GM12878 (cell line): ENCODE measurements at regions of chr6 and their contacts with region 1.

Region 1: GRCh38 chr6:70107852-70108629 is 194.8 kb downstream of the COL9A1 start:
- DNase-seq: peak; percentile 21
- ATAC-seq: peak; percentile 54
- H3K4me3 ChIP-seq: no peak overlapping the region
- H3K27ac ChIP-seq: no peak overlapping the region
- H3K4me1 ChIP-seq: no peaks in the 10 kb centered on the region
- H3K27me3 ChIP-seq: no peaks in the 10 kb centered on the region
- CTCF ChIP-seq: peak; percentile 50 to 71 (median 65)
- EP300 ChIP-seq: no peak
- POLR2A ChIP-seq: no peak
- RAD21 ChIP-seq: peak; percentile 92

Region 2: DNA sequence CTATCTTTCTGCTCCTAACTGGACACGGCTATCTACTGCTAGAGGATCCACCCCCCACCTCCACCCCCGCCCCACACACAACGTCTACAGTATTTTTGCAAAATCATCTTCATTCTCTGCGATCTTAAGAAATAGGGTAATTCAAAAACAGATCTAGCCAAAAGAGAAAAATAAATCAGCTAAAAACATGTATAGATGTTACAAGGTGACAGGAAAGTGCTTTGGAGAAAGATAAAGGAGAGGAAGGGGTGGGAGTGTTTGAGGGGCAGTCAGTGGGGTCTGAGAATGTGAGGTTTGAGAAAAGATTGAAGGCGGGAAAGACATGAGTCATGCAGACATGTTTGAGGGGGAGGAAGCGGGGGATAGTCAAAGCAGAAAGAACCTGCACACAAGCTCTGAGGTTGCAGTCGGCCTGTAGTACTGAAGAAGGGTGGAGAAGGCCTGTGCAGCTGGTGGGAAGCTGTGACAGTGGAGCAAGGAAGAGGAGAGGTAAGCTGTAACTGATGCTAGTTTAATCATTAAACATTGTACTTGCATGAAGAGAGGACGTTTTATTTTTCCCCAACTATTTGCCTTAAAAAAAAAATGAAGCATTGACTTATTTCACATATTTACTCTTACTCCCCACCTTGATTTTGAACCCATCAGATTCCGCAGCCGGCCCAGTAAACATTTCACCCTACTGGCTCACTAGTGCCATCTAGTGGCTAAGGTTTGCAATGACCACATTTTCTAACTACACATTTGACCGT is 1140.3 kb before region 1 on chr6:
- CTCF ChIA-PET with region 1: no interaction called
- POLR2A ChIA-PET with region 1: no interaction called
- RAD21 ChIA-PET with region 1: no interaction called
- SMC1A ChIA-PET with region 1: no interaction called
- in situ Hi-C with region 1: loop called (anchors 25 kb)
- intact Hi-C with region 1: no loop called
- DNase-seq: peak; percentile 12
- ATAC-seq: peak; percentile 80
- H3K4me3 ChIP-seq: no peak overlapping the region
- H3K27ac ChIP-seq: no peak overlapping the region
- H3K4me1 ChIP-seq: no peaks in the 10 kb centered on the region
- H3K27me3 ChIP-seq: no peaks in the 10 kb centered on the region; a peak in 1 of 4 replicates
- CTCF ChIP-seq: peak; percentile 81 to 86 (median 83)
- EP300 ChIP-seq: no peak
- POLR2A ChIP-seq: no peak
- RAD21 ChIP-seq: peak; percentile 70

Region 3: DNA sequence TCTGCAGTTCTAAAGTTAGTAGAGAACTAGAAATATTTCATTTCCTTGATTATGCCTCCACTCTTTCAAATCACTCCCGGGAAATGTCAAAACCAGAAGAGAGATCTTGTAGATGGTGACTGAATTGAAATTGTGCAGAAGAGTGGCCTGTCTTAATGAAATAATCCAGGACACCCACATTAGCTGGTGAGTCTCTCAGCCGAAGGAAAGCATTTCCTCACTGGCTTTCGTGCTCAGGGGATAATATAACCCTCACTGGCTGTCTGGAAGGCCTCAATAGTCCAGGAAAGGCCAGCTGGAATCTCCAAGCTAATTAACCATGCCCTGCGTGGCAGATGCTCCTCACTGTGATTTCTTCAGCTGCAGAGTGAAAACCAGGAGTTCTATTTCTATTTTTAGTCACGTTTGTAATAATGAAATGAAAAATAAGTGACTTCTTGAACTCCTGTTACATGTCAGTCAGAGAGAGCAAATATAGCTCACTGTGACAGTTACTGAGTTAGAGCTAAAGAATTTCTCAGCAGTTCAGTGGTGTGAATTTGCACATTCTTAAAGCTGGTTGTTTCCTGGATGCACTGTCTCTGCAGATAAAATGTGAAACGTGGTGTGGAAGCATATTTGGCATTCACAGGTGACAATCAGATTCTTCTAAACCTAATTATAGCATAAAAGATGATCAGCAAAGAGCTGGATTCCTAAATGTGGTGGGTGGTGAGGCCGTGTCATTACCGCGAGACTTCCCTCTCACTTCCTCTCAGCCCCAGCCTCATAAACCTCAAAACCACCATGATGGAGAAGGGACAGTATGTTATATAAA is 522.9 kb before region 1 on chr6:
- CTCF ChIA-PET with region 1: no interaction called
- POLR2A ChIA-PET with region 1: no interaction called
- RAD21 ChIA-PET with region 1: no interaction called
- SMC1A ChIA-PET with region 1: no interaction called
- in situ Hi-C with region 1: no loop called
- intact Hi-C with region 1: no loop called
- DNase-seq: peak; percentile 35
- ATAC-seq: peak; percentile 88
- H3K4me3 ChIP-seq: no peak overlapping the region
- H3K27ac ChIP-seq: peak overlapping the region; percentile 20; the same call in 1 of the 2 replicates
- H3K4me1 ChIP-seq: peaks cover 15% of the 10 kb centered on the region
- H3K27me3 ChIP-seq: no peaks in the 10 kb centered on the region
- CTCF ChIP-seq: no peak
- EP300 ChIP-seq: no peak
- POLR2A ChIP-seq: no peak
- RAD21 ChIP-seq: peak; percentile 1; the same call in 1 of the 2 replicates

Region 4: GRCh38 chr6:69791065-69791471 is 317.0 kb before region 1 on chr6:
- CTCF ChIA-PET with region 1: interaction called, 3 read pairs
- POLR2A ChIA-PET with region 1: interaction called, 3 read pairs
- RAD21 ChIA-PET with region 1: interaction called, 14 read pairs
- SMC1A ChIA-PET with region 1: interaction called, 19 read pairs
- in situ Hi-C with region 1: no loop called
- intact Hi-C with region 1: no loop called
- DNase-seq: no peak
- ATAC-seq: peak; percentile 59
- H3K4me3 ChIP-seq: peak overlapping the region; percentile 43
- H3K27ac ChIP-seq: peak overlapping the region; percentile 46; the same call in 1 of the 2 replicates
- H3K4me1 ChIP-seq: peaks cover 27% of the 10 kb centered on the region
- H3K27me3 ChIP-seq: no peaks in the 10 kb centered on the region
- CTCF ChIP-seq: no peak
- EP300 ChIP-seq: no peak
- POLR2A ChIP-seq: no peak
- RAD21 ChIP-seq: no peak

Region 5: DNA sequence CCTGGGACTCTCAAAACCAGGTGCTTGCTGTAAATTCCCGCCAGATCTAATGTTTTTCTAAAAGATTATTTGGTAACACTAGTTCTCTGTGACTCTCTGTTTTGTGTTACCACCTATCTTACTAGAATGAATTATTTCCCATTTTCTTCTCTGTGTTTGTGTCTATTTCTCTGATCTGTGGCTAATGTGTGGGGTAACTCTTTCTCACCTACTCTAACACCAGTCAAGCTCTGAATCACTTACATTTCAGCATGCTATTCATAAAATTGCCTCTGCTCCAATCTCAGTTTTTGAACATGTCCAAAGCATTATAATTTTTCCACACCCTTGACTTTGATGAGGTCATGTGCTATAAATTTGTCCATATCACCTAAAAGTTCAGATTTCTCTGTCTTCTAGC is 264.9 kb before region 1 on chr6:
- CTCF ChIA-PET with region 1: interaction called, 28 read pairs
- POLR2A ChIA-PET with region 1: no interaction called
- RAD21 ChIA-PET with region 1: interaction called, 32 read pairs
- SMC1A ChIA-PET with region 1: interaction called, 37 read pairs
- in situ Hi-C with region 1: no loop called
- intact Hi-C with region 1: no loop called
- DNase-seq: no peak
- ATAC-seq: peak; percentile 80
- H3K4me3 ChIP-seq: no peak overlapping the region
- H3K27ac ChIP-seq: no peak overlapping the region
- H3K4me1 ChIP-seq: no peaks in the 10 kb centered on the region
- H3K27me3 ChIP-seq: no peaks in the 10 kb centered on the region
- CTCF ChIP-seq: no peak
- EP300 ChIP-seq: peak; percentile 5 to 48; a peak in 1 of 4 replicates
- POLR2A ChIP-seq: no peak
- RAD21 ChIP-seq: no peak

Region 6: DNA sequence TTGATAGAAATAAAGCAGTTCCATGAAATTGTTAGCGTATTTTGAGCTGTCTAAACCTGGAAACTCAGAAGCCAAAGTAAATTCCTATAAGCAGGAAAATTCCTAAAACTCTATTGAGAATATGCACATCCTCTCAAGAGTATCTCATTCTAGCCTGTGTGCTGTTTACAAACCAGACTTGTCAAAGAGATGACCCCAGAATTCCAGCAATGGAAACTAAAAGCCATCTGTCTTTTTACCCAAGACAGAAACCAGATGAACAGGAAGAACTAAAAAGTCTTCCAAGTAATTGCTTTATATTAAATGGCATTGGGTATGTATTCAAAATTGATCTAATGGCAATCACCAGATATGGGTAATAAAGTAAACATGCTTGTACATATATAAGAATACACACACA is 149.1 kb before region 1 on chr6:
- CTCF ChIA-PET with region 1: no interaction called
- POLR2A ChIA-PET with region 1: no interaction called
- RAD21 ChIA-PET with region 1: no interaction called
- SMC1A ChIA-PET with region 1: no interaction called
- in situ Hi-C with region 1: no loop called
- intact Hi-C with region 1: no loop called
- DNase-seq: no peak
- ATAC-seq: no peak
- H3K4me3 ChIP-seq: no peak overlapping the region
- H3K27ac ChIP-seq: no peak overlapping the region
- H3K4me1 ChIP-seq: no peaks in the 10 kb centered on the region
- H3K27me3 ChIP-seq: no peaks in the 10 kb centered on the region
- CTCF ChIP-seq: no peak
- EP300 ChIP-seq: no peak
- POLR2A ChIP-seq: no peak
- RAD21 ChIP-seq: no peak

Region 7: DNA sequence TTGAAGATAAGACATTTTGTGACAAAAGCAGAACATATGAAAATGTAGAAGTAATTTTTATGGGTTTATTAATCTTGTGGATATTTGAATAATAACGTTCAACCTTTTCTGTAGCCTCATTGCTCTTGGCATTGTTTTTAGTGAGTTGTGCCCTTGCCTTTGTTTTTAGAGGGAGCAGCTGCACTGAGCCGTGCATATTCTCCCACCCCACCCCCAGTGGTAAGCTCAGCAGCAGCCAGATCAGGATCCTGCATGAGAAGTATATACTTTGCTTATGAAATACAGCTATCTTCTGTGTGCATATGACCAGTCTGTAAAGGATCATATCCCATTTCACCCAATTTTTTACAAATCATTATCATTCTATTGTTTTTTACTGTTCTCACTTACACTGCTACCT is 10.6 kb after region 1 on chr6:
- CTCF ChIA-PET with region 1: interaction called, 20 read pairs
- POLR2A ChIA-PET with region 1: no interaction called
- RAD21 ChIA-PET with region 1: interaction called, 6 read pairs
- SMC1A ChIA-PET with region 1: interaction called, 9 read pairs
- in situ Hi-C with region 1: no loop called
- intact Hi-C with region 1: no loop called
- DNase-seq: no peak
- ATAC-seq: no peak
- H3K4me3 ChIP-seq: no peak overlapping the region
- H3K27ac ChIP-seq: no peak overlapping the region
- H3K4me1 ChIP-seq: no peaks in the 10 kb centered on the region
- H3K27me3 ChIP-seq: no peaks in the 10 kb centered on the region
- CTCF ChIP-seq: no peak
- EP300 ChIP-seq: no peak
- POLR2A ChIP-seq: no peak
- RAD21 ChIP-seq: no peak

Region 8: GRCh38 chr6:70145178-70145577 is 37.1 kb after region 1 on chr6:
- CTCF ChIA-PET with region 1: no interaction called
- POLR2A ChIA-PET with region 1: no interaction called
- RAD21 ChIA-PET with region 1: no interaction called
- SMC1A ChIA-PET with region 1: no interaction called
- in situ Hi-C with region 1: no loop called
- intact Hi-C with region 1: no loop called
- DNase-seq: no peak
- ATAC-seq: no peak
- H3K4me3 ChIP-seq: no peak overlapping the region
- H3K27ac ChIP-seq: no peak overlapping the region
- H3K4me1 ChIP-seq: no peaks in the 10 kb centered on the region
- H3K27me3 ChIP-seq: no peaks in the 10 kb centered on the region
- CTCF ChIP-seq: no peak
- EP300 ChIP-seq: no peak
- POLR2A ChIP-seq: no peak
- RAD21 ChIP-seq: no peak

Region 9: DNA sequence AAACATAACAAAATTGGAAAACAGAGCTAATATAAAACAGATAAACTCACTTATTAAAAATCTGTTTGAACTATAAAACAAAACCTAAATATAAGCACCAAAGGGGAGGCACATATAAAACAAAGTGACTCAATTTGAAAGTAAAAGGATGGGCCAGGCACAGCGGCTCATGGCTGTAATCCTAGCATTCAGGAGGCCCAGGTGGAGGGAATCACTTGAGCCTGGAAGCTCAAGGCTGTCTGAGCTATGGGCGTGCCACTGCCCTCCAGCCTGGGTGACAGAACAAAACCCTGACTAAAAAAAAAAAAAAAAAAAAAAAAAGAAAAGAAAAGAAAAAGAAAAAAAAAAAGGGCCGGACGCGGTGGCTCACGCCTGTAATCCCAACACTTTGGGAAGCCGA is 528.5 kb after region 1 on chr6:
- CTCF ChIA-PET with region 1: no interaction called
- POLR2A ChIA-PET with region 1: no interaction called
- RAD21 ChIA-PET with region 1: no interaction called
- SMC1A ChIA-PET with region 1: no interaction called
- in situ Hi-C with region 1: no loop called
- intact Hi-C with region 1: no loop called
- DNase-seq: no peak
- ATAC-seq: no peak
- H3K4me3 ChIP-seq: no peak overlapping the region
- H3K27ac ChIP-seq: no peak overlapping the region
- H3K4me1 ChIP-seq: no peaks in the 10 kb centered on the region
- H3K27me3 ChIP-seq: no peaks in the 10 kb centered on the region; a peak in 1 of 4 replicates
- CTCF ChIP-seq: no peak
- EP300 ChIP-seq: no peak
- POLR2A ChIP-seq: no peak
- RAD21 ChIP-seq: no peak